Ovary (tissue), 10 donors: ENCODE measurements at regions of chr17 and their contacts with region 1.

Region 1: DNA sequence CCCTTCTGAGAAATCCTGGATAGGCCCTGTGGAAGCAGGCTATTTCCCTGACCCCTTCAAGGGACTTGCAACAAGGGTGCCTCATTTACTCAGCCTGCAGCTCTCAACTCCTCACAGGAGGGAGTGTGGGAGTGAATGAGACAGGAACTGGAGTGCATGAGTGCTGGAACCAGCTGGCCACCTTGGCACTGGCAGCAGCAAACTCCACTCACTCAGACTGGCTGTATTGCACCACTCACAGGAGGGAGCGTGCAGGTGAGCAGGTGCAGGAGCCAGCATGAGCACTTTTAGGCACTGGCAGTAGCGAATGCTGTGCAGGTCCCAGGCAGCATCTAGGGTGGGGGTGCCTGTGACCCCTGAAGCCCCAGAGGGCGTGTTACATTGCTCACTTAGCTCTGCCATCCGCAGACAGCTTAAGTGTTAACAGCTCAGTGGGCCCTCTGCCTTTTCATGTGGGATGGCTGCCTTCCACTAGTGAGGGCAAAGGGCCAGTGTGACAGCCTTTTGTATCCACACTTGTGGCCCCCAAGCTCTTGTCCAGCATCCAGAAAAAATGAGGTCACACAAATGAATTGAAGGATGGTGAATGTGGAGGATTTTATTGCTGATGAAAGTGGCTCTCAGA is 11.0 kb upstream of the ZNHIT3 start:
- DNase-seq: no peak
- H3K4me3 ChIP-seq: no peak overlapping the region
- H3K27ac ChIP-seq: no peak overlapping the region
- H3K4me1 ChIP-seq: no peaks in the 10 kb centered on the region
- H3K27me3 ChIP-seq: no peaks in the 10 kb centered on the region
- CTCF ChIP-seq: no peak
- EP300 ChIP-seq: no peak
- POLR2A ChIP-seq: no peak

Region 2: GRCh38 chr17:35969558-35970380 is 505.7 kb before region 1 on chr17:
- intact Hi-C with region 1: loop called in 2 of 4 experiments (anchors 10 kb)
- DNase-seq: peak; percentile 28 to 80 (median 67)
- H3K4me3 ChIP-seq: no peak overlapping the region
- H3K27ac ChIP-seq: no peak overlapping the region
- H3K4me1 ChIP-seq: no peaks in the 10 kb centered on the region
- H3K27me3 ChIP-seq: no peaks in the 10 kb centered on the region
- CTCF ChIP-seq: peak; percentile 48 to 62 (median 60)
- EP300 ChIP-seq: no peak
- POLR2A ChIP-seq: no peak

Region 3: GRCh38 chr17:36566081-36566480 is 90.6 kb after region 1 on chr17:
- intact Hi-C with region 1: no loop called
- DNase-seq: no peak
- H3K4me3 ChIP-seq: no peak overlapping the region
- H3K27ac ChIP-seq: no peak overlapping the region
- H3K4me1 ChIP-seq: no peaks in the 10 kb centered on the region
- H3K27me3 ChIP-seq: no peaks in the 10 kb centered on the region
- CTCF ChIP-seq: no peak
- EP300 ChIP-seq: no peak
- POLR2A ChIP-seq: no peak

Region 4: GRCh38 chr17:36722121-36722902 is 246.9 kb after region 1 on chr17:
- intact Hi-C with region 1: no loop called
- DNase-seq: peak; percentile 44 to 74 (median 59)
- H3K4me3 ChIP-seq: peak overlapping the region; percentile 40
- H3K27ac ChIP-seq: peak overlapping the region in 1 of 2 donors; percentile 30
- H3K4me1 ChIP-seq: peaks cover 5% of the 10 kb centered on the region
- H3K27me3 ChIP-seq: no peaks in the 10 kb centered on the region
- CTCF ChIP-seq: no peak
- EP300 ChIP-seq: no peak
- POLR2A ChIP-seq: no peak